Activated T-helper 1 cell treated with anti-CD3 and anti-CD28 coated beads, Interleukin-12 subunit alpha, Interleukin-12 subunit beta, Interleukin-2, Interleukin-4 antibody, amounts not matched to agents 30 ng/mL and 10 ng/mL and 1 ng/mL, durations not matched to agents 14 hours and 24 hours and 36 hours (primary cell): ENCODE measurements at regions of chr7 and their contacts with region 1.

Region 1: GRCh38 chr7:155669717-155670505 is 25.4 kb downstream of the RBM33 start:
- DNase-seq: no peak
- H3K4me3 Mint-ChIP-seq: no peak overlapping the region
- H3K27ac Mint-ChIP-seq: no peak overlapping the region
- H3K4me1 Mint-ChIP-seq: peaks cover 44% of the 10 kb centered on the region
- H3K27me3 Mint-ChIP-seq: no peaks in the 10 kb centered on the region

Region 2: GRCh38 chr7:155524018-155524616 is 145.8 kb before region 1 on chr7:
- intact Hi-C with region 1: no loop called
- DNase-seq: no peak
- H3K4me3 Mint-ChIP-seq: no peak overlapping the region
- H3K27ac Mint-ChIP-seq: no peak overlapping the region
- H3K4me1 Mint-ChIP-seq: no peaks in the 10 kb centered on the region
- H3K27me3 Mint-ChIP-seq: peaks cover 24% of the 10 kb centered on the region

Region 3: DNA sequence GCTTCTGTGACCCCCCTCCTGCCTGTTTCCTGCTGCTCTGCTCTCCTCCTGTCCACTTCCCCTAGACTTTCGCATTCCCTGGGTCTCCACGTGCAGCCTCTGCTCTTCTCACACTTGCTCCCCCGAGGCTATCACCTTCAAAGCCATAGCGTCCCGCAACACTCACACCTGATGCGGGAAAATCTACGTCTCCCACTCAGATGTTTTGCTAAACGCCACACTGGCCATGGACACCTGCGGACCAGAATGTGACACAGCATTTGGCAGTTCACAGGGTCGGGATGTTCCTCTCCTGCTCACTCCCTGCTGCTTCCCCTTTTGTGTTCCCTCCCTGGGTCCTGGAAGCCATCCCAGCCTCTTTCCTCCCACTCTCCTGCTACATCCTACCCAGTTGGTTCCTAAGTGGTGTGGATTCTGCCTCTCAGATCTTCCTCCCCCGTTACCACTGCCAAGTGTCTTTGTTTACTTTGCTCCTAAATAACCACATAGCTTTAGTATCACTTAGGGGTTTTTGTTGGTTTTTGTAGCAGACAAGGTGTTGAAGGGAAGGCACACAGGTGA is 59.2 kb before region 1 on chr7:
- intact Hi-C with region 1: no loop called
- DNase-seq: no peak
- H3K4me3 Mint-ChIP-seq: no peak overlapping the region
- H3K27ac Mint-ChIP-seq: no peak overlapping the region
- H3K4me1 Mint-ChIP-seq: no peaks in the 10 kb centered on the region
- H3K27me3 Mint-ChIP-seq: peaks cover 17% of the 10 kb centered on the region

Region 4: DNA sequence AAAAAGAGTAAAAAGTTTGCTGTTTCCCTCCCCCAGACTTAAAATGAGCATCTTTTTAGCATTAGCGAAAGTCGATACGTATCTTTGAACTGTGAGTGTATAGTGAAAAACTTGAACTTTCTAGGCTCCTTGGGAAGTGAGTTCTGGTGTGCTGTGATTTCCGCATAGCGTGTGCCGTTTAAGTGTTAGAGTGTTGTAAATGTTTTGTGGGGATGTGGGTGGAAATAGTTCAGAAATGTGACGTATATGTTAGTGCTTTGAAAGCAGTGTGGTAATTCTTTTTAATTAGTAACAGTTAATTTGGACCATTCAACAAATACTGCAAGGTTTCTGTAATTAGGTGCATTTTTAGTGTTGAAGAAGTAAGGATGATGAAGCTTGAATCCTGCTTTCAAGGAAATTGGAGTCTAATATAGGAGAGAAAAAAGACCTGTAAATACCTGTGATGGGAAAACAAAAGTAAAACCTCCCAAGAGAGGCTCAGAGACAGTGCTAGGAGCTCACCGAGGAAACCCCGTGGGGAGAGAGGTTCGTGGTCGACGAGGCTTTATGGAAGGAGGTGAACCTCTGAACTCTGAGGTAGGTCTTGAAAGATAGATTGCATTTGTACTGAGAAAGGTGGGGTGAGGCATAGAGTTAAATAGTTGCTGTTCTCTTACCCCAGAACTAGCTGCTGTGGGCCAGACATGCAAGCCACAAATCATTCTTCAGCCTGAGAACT is 15.3 kb after region 1 on chr7:
- intact Hi-C with region 1: loop called (anchors 2 kb)
- DNase-seq: peak; percentile 17
- H3K4me3 Mint-ChIP-seq: peak overlapping the region; percentile 15
- H3K27ac Mint-ChIP-seq: peak overlapping the region; percentile 30
- H3K4me1 Mint-ChIP-seq: peaks cover 53% of the 10 kb centered on the region
- H3K27me3 Mint-ChIP-seq: no peaks in the 10 kb centered on the region

Region 5: DNA sequence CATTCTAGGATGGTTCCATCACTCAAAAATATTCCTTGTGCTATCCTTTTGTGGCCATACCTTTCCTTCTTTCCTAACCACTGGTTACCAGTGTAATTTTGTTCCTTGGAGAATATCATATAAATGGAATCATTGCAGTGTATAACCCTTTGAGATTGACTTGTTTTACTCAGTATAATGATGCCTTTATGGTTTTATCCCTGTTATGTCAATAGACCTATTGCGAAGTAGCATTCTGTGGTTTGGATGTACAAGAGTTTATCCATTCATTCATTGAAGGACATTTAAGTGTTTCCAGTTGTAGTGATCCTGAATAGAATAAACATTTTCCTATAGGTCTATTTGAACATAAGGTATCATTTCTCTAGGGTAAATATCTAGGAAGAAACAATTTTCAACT is 28.7 kb after region 1 on chr7:
- intact Hi-C with region 1: no loop called
- DNase-seq: no peak
- H3K4me3 Mint-ChIP-seq: no peak overlapping the region
- H3K27ac Mint-ChIP-seq: no peak overlapping the region
- H3K4me1 Mint-ChIP-seq: peaks cover 57% of the 10 kb centered on the region
- H3K27me3 Mint-ChIP-seq: no peaks in the 10 kb centered on the region